ENCODE measurements at regions of chr20 and their contacts with region 1.

Region 1: GRCh38 chr20:31822421-31823330 is 3.5 kb downstream of the MYLK2 start:
- DNase-seq: peak; percentile 76
- ATAC-seq: peak; percentile 90
- H3K4me3 Mint-ChIP-seq: no peak overlapping the region
- H3K27ac Mint-ChIP-seq: no peak overlapping the region
- H3K4me1 Mint-ChIP-seq: peaks cover 7% of the 10 kb centered on the region
- H3K27me3 Mint-ChIP-seq: no peaks in the 10 kb centered on the region

Region 2: DNA sequence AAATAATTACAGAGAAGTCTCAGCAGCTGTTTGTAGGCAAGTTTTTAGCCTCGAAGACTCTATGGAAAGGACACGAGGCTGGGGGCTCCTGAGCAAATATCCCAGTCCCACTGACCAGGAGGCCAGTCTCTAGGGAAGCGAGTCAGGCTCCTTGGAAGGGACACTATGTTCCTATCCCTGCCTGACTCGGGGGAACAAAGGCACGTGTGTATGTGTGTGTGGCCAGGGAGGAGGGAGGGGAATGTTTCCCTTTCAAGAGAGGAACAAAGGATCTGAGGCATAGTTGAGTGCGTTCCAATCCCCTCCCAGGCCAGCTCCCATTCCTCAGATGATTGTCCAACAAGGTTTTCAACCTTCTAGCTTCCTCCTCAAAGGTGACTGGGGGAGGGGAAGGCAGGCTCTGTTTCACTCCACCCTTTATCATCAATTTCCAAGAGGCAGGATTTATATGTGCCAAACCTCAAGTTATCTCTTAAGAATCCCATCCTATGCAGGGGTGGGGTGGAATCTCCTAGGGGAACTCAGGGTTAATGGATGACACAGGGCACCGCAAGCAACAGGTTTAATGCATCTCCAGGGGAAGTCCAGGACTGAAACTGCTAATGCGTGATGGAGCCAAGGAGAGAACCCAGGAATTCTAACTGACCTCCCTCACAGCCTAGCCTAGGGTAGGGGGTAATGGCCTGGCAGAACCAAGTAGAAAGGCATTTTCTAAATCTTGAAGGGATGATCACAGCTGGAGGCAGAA is 109.9 kb before region 1 on chr20:
- CTCF ChIA-PET with region 1: no interaction called
- DNase-seq: no peak
- ATAC-seq: no peak
- H3K4me3 Mint-ChIP-seq: no peak overlapping the region
- H3K27ac Mint-ChIP-seq: no peak overlapping the region
- H3K4me1 Mint-ChIP-seq: peaks cover 89% of the 10 kb centered on the region
- H3K27me3 Mint-ChIP-seq: no peaks in the 10 kb centered on the region

Region 3: GRCh38 chr20:31788578-31788977 is 34.1 kb before region 1 on chr20:
- CTCF ChIA-PET with region 1: no interaction called
- DNase-seq: no peak
- ATAC-seq: no peak
- H3K4me3 Mint-ChIP-seq: no peak overlapping the region
- H3K27ac Mint-ChIP-seq: no peak overlapping the region
- H3K4me1 Mint-ChIP-seq: peaks cover 4% of the 10 kb centered on the region
- H3K27me3 Mint-ChIP-seq: no peaks in the 10 kb centered on the region

Region 4: GRCh38 chr20:31806564-31807355 is 15.9 kb before region 1 on chr20:
- CTCF ChIA-PET with region 1: interaction called, 33 read pairs
- DNase-seq: no peak
- ATAC-seq: no peak
- H3K4me3 Mint-ChIP-seq: no peak overlapping the region
- H3K27ac Mint-ChIP-seq: peak overlapping the region; percentile 16
- H3K4me1 Mint-ChIP-seq: peaks cover 11% of the 10 kb centered on the region
- H3K27me3 Mint-ChIP-seq: no peaks in the 10 kb centered on the region

Region 5: GRCh38 chr20:31842471-31843157 is 19.9 kb after region 1 on chr20:
- CTCF ChIA-PET with region 1: interaction called, 110 read pairs
- DNase-seq: no peak
- ATAC-seq: no peak
- H3K4me3 Mint-ChIP-seq: no peak overlapping the region
- H3K27ac Mint-ChIP-seq: no peak overlapping the region
- H3K4me1 Mint-ChIP-seq: no peaks in the 10 kb centered on the region
- H3K27me3 Mint-ChIP-seq: peaks cover 6% of the 10 kb centered on the region

Region 6: DNA sequence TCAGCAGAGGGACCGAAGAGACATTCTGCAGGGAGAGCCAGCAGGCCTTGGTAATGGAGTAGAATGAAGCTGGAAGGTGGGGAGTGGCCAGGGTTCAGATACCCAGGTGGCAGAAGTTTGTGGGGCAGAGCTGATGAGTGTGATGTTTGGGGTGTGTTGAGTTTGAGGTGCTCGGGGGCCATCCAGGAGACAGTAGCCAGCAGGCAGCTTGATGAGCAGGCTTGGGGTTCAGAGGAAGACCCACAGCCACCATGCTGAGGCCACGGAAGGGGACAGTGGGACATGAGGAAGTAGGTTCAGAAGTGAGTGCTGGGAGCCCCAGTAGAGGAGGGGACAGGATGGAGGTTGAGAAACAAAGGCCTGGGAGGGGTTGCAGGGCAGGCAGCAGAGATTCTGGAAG is 33.8 kb after region 1 on chr20:
- CTCF ChIA-PET with region 1: interaction called, 31 read pairs
- DNase-seq: no peak
- ATAC-seq: no peak
- H3K4me3 Mint-ChIP-seq: no peak overlapping the region
- H3K27ac Mint-ChIP-seq: no peak overlapping the region
- H3K4me1 Mint-ChIP-seq: peaks cover 6% of the 10 kb centered on the region
- H3K27me3 Mint-ChIP-seq: peaks cover 26% of the 10 kb centered on the region

Region 7: GRCh38 chr20:32091888-32092346 is 269.2 kb after region 1 on chr20:
- CTCF ChIA-PET with region 1: interaction called, 14 read pairs
- DNase-seq: peak; percentile 85
- ATAC-seq: peak; percentile 85
- H3K4me3 Mint-ChIP-seq: no peak overlapping the region
- H3K27ac Mint-ChIP-seq: no peak overlapping the region
- H3K4me1 Mint-ChIP-seq: no peaks in the 10 kb centered on the region
- H3K27me3 Mint-ChIP-seq: peaks cover 18% of the 10 kb centered on the region

Measured in activated CD8-positive, alpha-beta memory T cell treated with anti-CD3 and anti-CD28 coated beads, Interleukin-2, amount 10 ng/mL, durations not matched to agents 7 days and 5 days (primary cell).